K562 (cell line): ENCODE measurements at regions of chr16 and their contacts with region 1.

Region 1: GRCh38 chr16:3094289-3095027 is 4.6 kb downstream of the ZSCAN10 start:
- DNase-seq: peak; percentile 66 to 80 (median 68)
- ATAC-seq: peak; percentile 85
- H3K4me3 ChIP-seq: no peak overlapping the region
- H3K27ac ChIP-seq: no peak overlapping the region
- H3K4me1 ChIP-seq: peaks cover 3 to 36% of the 10 kb centered on the region in 2 experiments; a peak in 4 of 5 replicates
- H3K27me3 ChIP-seq: peaks cover 2 to 21% of the 10 kb centered on the region in 2 experiments; a peak in 2 of 5 replicates
- CTCF ChIP-seq: peak; percentile 84 to 88 (median 86)
- EP300 ChIP-seq: no peak
- POLR2A ChIP-seq: no peak
- RAD21 ChIP-seq: peak; percentile 36 to 77; a peak in 3 of 4 replicates

Region 2: GRCh38 chr16:3123986-3124886 is 29.8 kb after region 1 on chr16:
- CTCF ChIA-PET with region 1: interaction called, 10 read pairs
- POLR2A ChIA-PET with region 1: interaction called, 4 read pairs
- in situ Hi-C with region 1: no loop called
- intact Hi-C with region 1: loop called (anchors 2 kb)
- DNase-seq: peak; percentile 94 to 98 (median 96)
- ATAC-seq: peak; percentile 97
- H3K4me3 ChIP-seq: peak overlapping the region; percentile 91
- H3K27ac ChIP-seq: peak overlapping the region; percentile 58
- H3K4me1 ChIP-seq: peaks cover 13 to 29% of the 10 kb centered on the region in 2 experiments
- H3K27me3 ChIP-seq: no peaks in the 10 kb centered on the region
- CTCF ChIP-seq: peak; percentile 44 to 57 (median 53)
- EP300 ChIP-seq: no peak
- POLR2A ChIP-seq: peak; percentile 83
- RAD21 ChIP-seq: peak; percentile 34 to 51; a peak in 3 of 4 replicates

Region 3: GRCh38 chr16:3129137-3130131 is 35.0 kb after region 1 on chr16:
- CTCF ChIA-PET with region 1: interaction called, 10 read pairs
- POLR2A ChIA-PET with region 1: interaction called, 4 read pairs
- in situ Hi-C with region 1: no loop called
- intact Hi-C with region 1: loop called (anchors 2 kb)
- DNase-seq: peak in 3 of 4 experiments; percentile 37 to 91 (median 49)
- ATAC-seq: peak; percentile 77
- H3K4me3 ChIP-seq: peak overlapping the region; percentile 40
- H3K27ac ChIP-seq: peak overlapping the region; percentile 40
- H3K4me1 ChIP-seq: peaks cover 15 to 24% of the 10 kb centered on the region in 2 experiments; a peak in 4 of 5 replicates
- H3K27me3 ChIP-seq: no peaks in the 10 kb centered on the region
- CTCF ChIP-seq: peak; percentile 93 to 95 (median 93)
- EP300 ChIP-seq: no peak
- POLR2A ChIP-seq: peak; percentile 62; the same call in 1 of the 2 replicates
- RAD21 ChIP-seq: peak; percentile 72 to 79